K562 (cell line): ENCODE measurements at regions of chr15 and their contacts with region 1.

Region 1: DNA sequence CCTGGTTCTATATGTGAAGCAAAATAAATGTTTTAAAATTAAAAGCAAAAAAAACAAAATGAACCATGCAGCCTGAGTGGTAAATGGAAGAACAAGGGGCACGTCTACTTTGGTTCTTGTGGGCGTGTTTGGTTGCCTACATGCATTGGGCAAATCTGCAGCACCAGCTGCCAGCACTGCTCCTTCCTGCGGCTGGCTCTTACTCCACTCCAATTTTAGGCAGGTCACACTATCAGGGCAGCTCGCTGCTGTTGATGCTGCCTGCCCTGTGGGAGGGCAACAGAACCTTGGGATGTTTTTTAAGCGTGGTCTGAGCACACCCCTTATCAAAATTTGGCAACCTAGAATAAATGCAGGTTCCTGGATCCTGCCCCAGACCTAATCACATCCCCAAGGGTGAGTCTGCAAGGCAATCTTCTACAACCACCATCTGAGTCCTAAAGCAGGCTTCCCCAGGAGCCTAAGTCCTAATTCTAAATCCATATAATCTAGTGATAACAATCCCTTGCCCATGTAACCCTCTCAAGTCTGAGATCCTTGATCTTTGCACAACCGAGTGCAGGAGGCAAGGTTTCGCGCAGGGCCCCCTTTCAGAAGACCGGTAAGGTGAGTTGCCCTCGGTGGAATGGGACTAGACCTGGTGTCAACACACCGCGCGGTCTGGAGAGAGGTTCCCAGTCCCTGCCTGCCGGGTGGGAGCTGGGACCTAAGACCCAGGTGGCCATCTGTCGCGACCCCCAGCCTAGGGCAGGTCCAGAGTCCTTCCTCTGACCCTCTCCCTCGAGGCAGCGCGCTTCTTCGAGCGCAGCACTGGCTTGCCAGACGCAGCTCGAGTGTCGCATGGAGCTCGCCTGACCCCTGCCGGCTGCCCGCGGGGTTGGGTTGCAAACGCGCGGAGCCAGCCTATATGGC is 15.9 kb downstream of the IVD start:
- DNase-seq: peak; percentile 84 to 89 (median 86)
- ATAC-seq: peak; percentile 100
- H3K4me3 ChIP-seq: no peak overlapping the region
- H3K27ac ChIP-seq: no peak overlapping the region
- H3K4me1 ChIP-seq: peaks cover 2 to 14% of the 10 kb centered on the region in 2 experiments; a peak in 4 of 5 replicates
- H3K27me3 ChIP-seq: no peaks in the 10 kb centered on the region
- CTCF ChIP-seq: peak; percentile 93 to 97 (median 94)
- EP300 ChIP-seq: no peak
- POLR2A ChIP-seq: no peak
- RAD21 ChIP-seq: peak; percentile 91 to 95

Region 2: DNA sequence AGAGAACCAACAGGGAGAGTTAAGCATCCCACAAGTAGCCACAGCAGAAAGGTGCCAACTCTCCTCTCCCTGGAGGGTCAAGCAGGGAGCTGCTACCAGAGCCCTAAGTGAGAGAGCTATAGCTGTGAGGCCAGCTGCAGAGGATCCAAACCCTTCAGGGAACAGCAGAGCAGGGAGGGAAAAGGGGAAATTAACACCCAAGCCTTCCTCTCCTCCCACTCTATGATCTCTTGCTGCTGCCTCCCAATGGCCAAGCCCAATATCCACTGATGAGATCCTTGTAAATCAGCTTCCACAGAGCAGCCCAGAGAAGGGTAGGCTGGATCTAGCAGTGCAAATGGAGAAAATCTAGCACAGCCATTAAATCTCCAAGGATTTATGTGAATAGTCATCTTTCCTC is 908.9 kb before region 1 on chr15:
- CTCF ChIA-PET with region 1: no interaction called
- POLR2A ChIA-PET with region 1: no interaction called
- in situ Hi-C with region 1: no loop called
- intact Hi-C with region 1: no loop called
- DNase-seq: no peak
- ATAC-seq: no peak
- H3K4me3 ChIP-seq: no peak overlapping the region
- H3K27ac ChIP-seq: no peak overlapping the region
- H3K4me1 ChIP-seq: peaks cover 11 to 31% of the 10 kb centered on the region in 2 experiments; a peak in 4 of 5 replicates
- H3K27me3 ChIP-seq: no peaks in the 10 kb centered on the region
- CTCF ChIP-seq: no peak
- EP300 ChIP-seq: no peak
- POLR2A ChIP-seq: no peak
- RAD21 ChIP-seq: peak in 1 of 2 experiments; percentile 14; a peak in 1 of 4 replicates

Region 3: GRCh38 chr15:40054605-40055545 is 366.6 kb before region 1 on chr15:
- CTCF ChIA-PET with region 1: no interaction called
- POLR2A ChIA-PET with region 1: no interaction called
- in situ Hi-C with region 1: loop called (anchors 10 kb)
- intact Hi-C with region 1: no loop called
- DNase-seq: no peak
- ATAC-seq: no peak
- H3K4me3 ChIP-seq: no peak overlapping the region
- H3K27ac ChIP-seq: no peak overlapping the region
- H3K4me1 ChIP-seq: peaks cover 0 to 13% of the 10 kb centered on the region in 2 experiments; a peak in 3 of 5 replicates
- H3K27me3 ChIP-seq: no peaks in the 10 kb centered on the region
- CTCF ChIP-seq: no peak
- EP300 ChIP-seq: no peak
- POLR2A ChIP-seq: no peak
- RAD21 ChIP-seq: no peak

Region 4: GRCh38 chr15:40282144-40282868 is 139.2 kb before region 1 on chr15:
- CTCF ChIA-PET with region 1: interaction called, 28 read pairs
- POLR2A ChIA-PET with region 1: no interaction called
- in situ Hi-C with region 1: no loop called
- intact Hi-C with region 1: loop called (anchors 2 kb)
- DNase-seq: peak; percentile 71 to 81 (median 80)
- ATAC-seq: peak; percentile 84
- H3K4me3 ChIP-seq: peak overlapping the region; percentile 58
- H3K27ac ChIP-seq: no peak overlapping the region; the same call in 2 of the 3 replicates
- H3K4me1 ChIP-seq: peaks cover 13 to 54% of the 10 kb centered on the region in 2 experiments
- H3K27me3 ChIP-seq: no peaks in the 10 kb centered on the region; a peak in 1 of 5 replicates
- CTCF ChIP-seq: peak; percentile 53 to 68 (median 55); a peak in 5 of 6 replicates
- EP300 ChIP-seq: no peak
- POLR2A ChIP-seq: no peak
- RAD21 ChIP-seq: peak; percentile 43 to 51

Region 5: DNA sequence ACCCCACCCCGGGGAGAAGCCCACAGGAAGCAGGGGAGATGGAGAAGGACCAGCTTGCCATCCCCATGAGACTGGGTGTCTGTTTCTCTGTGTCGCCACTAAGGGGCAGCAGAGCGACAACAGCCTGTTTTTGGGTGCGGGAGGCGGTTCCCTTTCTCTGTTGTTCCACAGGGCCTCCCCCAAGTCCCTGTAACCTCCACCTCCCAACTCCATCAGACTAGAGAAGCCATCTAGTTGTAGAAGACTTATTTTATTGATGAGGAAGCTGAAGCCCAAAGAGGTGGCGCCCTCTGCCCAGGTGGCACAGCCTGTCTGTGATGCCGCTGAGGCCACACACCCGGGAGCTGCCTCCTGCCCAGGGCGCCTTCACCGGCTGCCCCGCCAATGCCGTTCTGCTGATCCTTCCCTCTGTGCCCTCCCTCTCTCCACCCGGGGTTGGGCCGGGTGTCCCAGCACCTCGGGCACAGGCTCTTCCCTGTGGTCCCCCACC is 76.8 kb before region 1 on chr15:
- CTCF ChIA-PET with region 1: interaction called, 28 read pairs
- POLR2A ChIA-PET with region 1: interaction called, 3 read pairs
- in situ Hi-C with region 1: loop called (anchors 5 kb)
- intact Hi-C with region 1: loop called (anchors 1 kb)
- DNase-seq: peak; percentile 78 to 81 (median 78)
- ATAC-seq: peak; percentile 75
- H3K4me3 ChIP-seq: no peak overlapping the region
- H3K27ac ChIP-seq: no peak overlapping the region
- H3K4me1 ChIP-seq: peaks cover 7 to 24% of the 10 kb centered on the region in 2 experiments; a peak in 4 of 5 replicates
- H3K27me3 ChIP-seq: no peaks in the 10 kb centered on the region
- CTCF ChIP-seq: peak; percentile 87 to 91 (median 87)
- EP300 ChIP-seq: no peak
- POLR2A ChIP-seq: no peak
- RAD21 ChIP-seq: peak; percentile 49 to 80

Region 6: GRCh38 chr15:40367686-40368611 is 53.6 kb before region 1 on chr15:
- CTCF ChIA-PET with region 1: interaction called, 23 read pairs
- POLR2A ChIA-PET with region 1: interaction called, 4 read pairs
- in situ Hi-C with region 1: no loop called
- intact Hi-C with region 1: no loop called
- DNase-seq: peak; percentile 89 to 93 (median 92)
- ATAC-seq: peak; percentile 92
- H3K4me3 ChIP-seq: peak overlapping the region; percentile 22; the same call in 1 of the 2 replicates
- H3K27ac ChIP-seq: no peak overlapping the region
- H3K4me1 ChIP-seq: peaks cover 9 to 47% of the 10 kb centered on the region in 2 experiments
- H3K27me3 ChIP-seq: peaks cover 0 to 16% of the 10 kb centered on the region in 2 experiments; a peak in 3 of 5 replicates
- CTCF ChIP-seq: peak; percentile 82 to 98 (median 94)
- EP300 ChIP-seq: peak; percentile 19; the same call in 1 of the 2 replicates
- POLR2A ChIP-seq: no peak
- RAD21 ChIP-seq: peak in 1 of 2 experiments; percentile 77; a peak in 3 of 4 replicates

Region 7: DNA sequence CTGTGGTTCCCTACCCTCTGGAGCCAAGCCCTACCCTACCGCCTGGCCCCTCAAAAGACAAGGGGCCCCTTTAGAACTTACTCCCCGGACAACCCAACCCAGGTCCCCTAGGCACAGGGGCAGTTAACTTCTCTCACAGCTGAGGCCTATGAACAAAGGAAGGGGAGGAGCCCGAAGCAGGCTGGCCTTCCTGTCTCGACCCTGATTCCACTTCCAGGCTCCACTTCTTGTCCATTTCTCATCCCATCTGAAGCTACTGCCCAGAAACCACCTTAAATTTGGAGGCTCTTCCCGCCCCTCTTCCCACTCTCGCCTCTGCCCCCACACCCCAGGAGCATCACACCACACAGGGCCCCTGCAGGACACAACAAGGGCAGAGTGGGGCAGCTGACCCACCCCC is 54.5 kb after region 1 on chr15:
- CTCF ChIA-PET with region 1: no interaction called
- POLR2A ChIA-PET with region 1: no interaction called
- in situ Hi-C with region 1: no loop called
- intact Hi-C with region 1: no loop called
- DNase-seq: no peak
- ATAC-seq: no peak
- H3K4me3 ChIP-seq: no peak overlapping the region
- H3K27ac ChIP-seq: no peak overlapping the region
- H3K4me1 ChIP-seq: peaks cover 7 to 18% of the 10 kb centered on the region in 2 experiments; a peak in 4 of 5 replicates
- H3K27me3 ChIP-seq: no peaks in the 10 kb centered on the region; a peak in 1 of 5 replicates
- CTCF ChIP-seq: no peak
- EP300 ChIP-seq: no peak
- POLR2A ChIP-seq: no peak
- RAD21 ChIP-seq: no peak

Region 8: DNA sequence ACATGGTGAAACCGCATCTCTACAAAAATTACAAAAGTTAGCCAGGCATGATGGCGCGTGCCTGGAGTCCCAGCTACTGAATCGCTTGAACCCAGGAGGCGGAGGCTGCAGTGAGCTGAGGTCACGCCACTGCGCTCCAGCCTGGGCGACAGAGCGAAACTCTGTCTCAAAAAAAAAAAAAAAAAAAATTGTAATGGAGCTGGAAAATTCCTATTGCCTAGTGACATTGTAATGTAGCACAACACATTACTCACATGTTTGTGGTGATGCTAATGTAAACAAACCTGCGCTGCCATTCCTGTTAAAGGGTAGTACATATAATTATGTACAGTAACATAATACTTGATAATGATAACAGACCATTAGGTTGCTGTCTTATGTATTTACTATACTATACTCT is 211.6 kb after region 1 on chr15:
- CTCF ChIA-PET with region 1: no interaction called
- POLR2A ChIA-PET with region 1: no interaction called
- in situ Hi-C with region 1: no loop called
- intact Hi-C with region 1: no loop called
- DNase-seq: no peak
- ATAC-seq: no peak
- H3K4me3 ChIP-seq: no peak overlapping the region
- H3K27ac ChIP-seq: no peak overlapping the region
- H3K4me1 ChIP-seq: no peaks in the 10 kb centered on the region
- H3K27me3 ChIP-seq: no peaks in the 10 kb centered on the region
- CTCF ChIP-seq: no peak
- EP300 ChIP-seq: no peak
- POLR2A ChIP-seq: no peak
- RAD21 ChIP-seq: no peak

Region 9: DNA sequence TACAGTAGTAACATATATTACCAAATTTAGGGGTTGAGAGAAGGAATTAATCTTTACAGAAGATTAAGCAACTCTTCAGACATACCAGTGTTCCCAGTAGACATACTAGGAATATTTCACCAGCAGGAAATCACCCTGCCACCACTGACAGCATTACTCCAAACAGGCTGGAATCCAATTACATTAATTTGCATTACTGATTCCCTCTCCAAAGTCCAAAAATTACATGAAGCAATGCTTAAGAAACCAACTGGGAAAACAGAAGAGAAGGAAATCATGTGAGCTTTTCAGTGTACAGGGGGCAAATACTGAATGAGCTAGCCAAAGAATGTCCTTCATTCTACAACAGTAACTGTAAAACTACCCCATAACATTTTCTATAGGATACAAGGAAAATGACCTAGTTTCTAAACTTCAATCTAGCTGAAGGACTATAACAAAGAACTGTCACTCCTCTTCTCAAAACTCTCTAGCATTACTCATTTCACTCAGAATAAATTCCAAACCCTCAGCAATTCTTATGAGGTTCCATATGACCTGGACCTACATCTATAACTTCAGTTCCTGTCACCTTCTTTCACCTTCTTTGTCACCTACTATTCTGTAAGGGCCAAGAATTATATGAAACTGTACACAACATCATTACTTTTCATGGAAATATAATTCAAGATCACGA is 621.9 kb after region 1 on chr15:
- CTCF ChIA-PET with region 1: no interaction called
- POLR2A ChIA-PET with region 1: no interaction called
- in situ Hi-C with region 1: no loop called
- intact Hi-C with region 1: no loop called
- DNase-seq: no peak
- ATAC-seq: no peak
- H3K4me3 ChIP-seq: no peak overlapping the region
- H3K27ac ChIP-seq: no peak overlapping the region
- H3K4me1 ChIP-seq: no peaks in the 10 kb centered on the region; a peak in 2 of 5 replicates
- H3K27me3 ChIP-seq: no peaks in the 10 kb centered on the region
- CTCF ChIP-seq: no peak
- EP300 ChIP-seq: no peak
- POLR2A ChIP-seq: no peak
- RAD21 ChIP-seq: no peak